Activated B cell treated with CpG ODN at 0.5 μM for 24 hours (primary cell): ENCODE measurements at regions of chr17 and their contacts with region 1.

Region 1: GRCh38 chr17:31008374-31009041 is 37.7 kb downstream of the RNF135 start:
- DNase-seq: peak; percentile 66
- ATAC-seq: peak; percentile 85
- H3K4me3 Mint-ChIP-seq: peak overlapping the region; percentile 91
- H3K27ac Mint-ChIP-seq: peak overlapping the region; percentile 85
- H3K4me1 Mint-ChIP-seq: peaks cover 24% of the 10 kb centered on the region
- H3K27me3 Mint-ChIP-seq: no peaks in the 10 kb centered on the region
- CTCF ChIP-seq: no peak

Region 2: GRCh38 chr17:30906101-30906911 is 102.2 kb before region 1 on chr17 and contains the start of gene TEFM:
- CTCF ChIA-PET with region 1: interaction called, 4 read pairs
- POLR2A ChIA-PET with region 1: interaction called, 6 read pairs
- intact Hi-C with region 1: loop called (anchors 2 kb)
- DNase-seq: peak; percentile 90
- ATAC-seq: peak; percentile 98
- H3K4me3 Mint-ChIP-seq: peak within 1 kb of the TSS; percentile 95
- H3K27ac Mint-ChIP-seq: peak within 1 kb of the TSS; percentile 93
- H3K4me1 Mint-ChIP-seq: peaks cover 42% of the 10 kb centered on the region
- H3K27me3 Mint-ChIP-seq: no peaks in the 10 kb centered on the region
- CTCF ChIP-seq: no peak
- total RNA-seq, gene TEFM: 23.0 and 25.2 TPM in 2 replicates

Region 3: GRCh38 chr17:30921544-30922196 is 86.8 kb before region 1 on chr17 and contains the start of gene ADAP2:
- CTCF ChIA-PET with region 1: interaction called, 3 read pairs
- POLR2A ChIA-PET with region 1: interaction called, 5 read pairs
- intact Hi-C with region 1: loop called (anchors 5 kb)
- DNase-seq: peak; percentile 53
- ATAC-seq: peak; percentile 73
- H3K4me3 Mint-ChIP-seq: peak within 1 kb of the TSS; percentile 93
- H3K27ac Mint-ChIP-seq: peak within 1 kb of the TSS; percentile 77
- H3K4me1 Mint-ChIP-seq: peaks cover 23% of the 10 kb centered on the region
- H3K27me3 Mint-ChIP-seq: peaks cover 1% of the 10 kb centered on the region
- CTCF ChIP-seq: no peak
- total RNA-seq, gene ADAP2: 16.0 and 16.9 TPM in 2 replicates

Region 4: GRCh38 chr17:30933966-30934365 is 74.5 kb before region 1 on chr17:
- CTCF ChIA-PET with region 1: no interaction called
- POLR2A ChIA-PET with region 1: interaction called, 10 read pairs
- intact Hi-C with region 1: no loop called
- DNase-seq: no peak
- ATAC-seq: no peak
- H3K4me3 Mint-ChIP-seq: no peak overlapping the region
- H3K27ac Mint-ChIP-seq: peak overlapping the region; percentile 42
- H3K4me1 Mint-ChIP-seq: peaks cover 8% of the 10 kb centered on the region
- H3K27me3 Mint-ChIP-seq: no peaks in the 10 kb centered on the region
- CTCF ChIP-seq: no peak

Region 5: GRCh38 chr17:30961209-30962188 is 47.0 kb before region 1 on chr17:
- CTCF ChIA-PET with region 1: no interaction called
- POLR2A ChIA-PET with region 1: interaction called, 11 read pairs
- intact Hi-C with region 1: loop called (anchors 2 kb)
- DNase-seq: peak; percentile 53
- ATAC-seq: peak; percentile 72
- H3K4me3 Mint-ChIP-seq: peak overlapping the region; percentile 78
- H3K27ac Mint-ChIP-seq: peak overlapping the region; percentile 88
- H3K4me1 Mint-ChIP-seq: peaks cover 72% of the 10 kb centered on the region
- H3K27me3 Mint-ChIP-seq: no peaks in the 10 kb centered on the region
- CTCF ChIP-seq: no peak

Region 6: DNA sequence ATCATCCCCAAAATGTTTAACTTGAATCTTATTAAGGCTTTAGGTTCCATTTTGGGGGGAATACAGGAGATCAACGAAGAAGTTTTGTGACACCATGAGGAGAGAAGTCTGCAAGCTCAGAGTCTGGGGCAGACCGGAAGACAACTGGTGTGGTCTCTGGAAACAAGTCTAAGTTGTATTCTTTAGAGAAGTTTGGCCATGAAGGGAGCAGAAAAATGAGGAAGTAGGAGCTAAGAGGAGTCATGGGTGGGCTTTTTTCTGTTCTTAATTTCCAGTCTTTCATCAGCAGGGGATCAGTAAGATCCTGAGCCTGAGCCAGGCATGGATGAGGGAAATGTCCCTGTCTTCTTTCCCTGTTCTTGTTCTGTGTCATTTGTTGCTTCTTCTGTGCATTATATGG is 50.5 kb after region 1 on chr17:
- CTCF ChIA-PET with region 1: no interaction called
- POLR2A ChIA-PET with region 1: no interaction called
- intact Hi-C with region 1: no loop called
- DNase-seq: no peak
- ATAC-seq: no peak
- H3K4me3 Mint-ChIP-seq: no peak overlapping the region
- H3K27ac Mint-ChIP-seq: no peak overlapping the region
- H3K4me1 Mint-ChIP-seq: peaks cover 5% of the 10 kb centered on the region
- H3K27me3 Mint-ChIP-seq: no peaks in the 10 kb centered on the region
- CTCF ChIP-seq: no peak

Region 7: DNA sequence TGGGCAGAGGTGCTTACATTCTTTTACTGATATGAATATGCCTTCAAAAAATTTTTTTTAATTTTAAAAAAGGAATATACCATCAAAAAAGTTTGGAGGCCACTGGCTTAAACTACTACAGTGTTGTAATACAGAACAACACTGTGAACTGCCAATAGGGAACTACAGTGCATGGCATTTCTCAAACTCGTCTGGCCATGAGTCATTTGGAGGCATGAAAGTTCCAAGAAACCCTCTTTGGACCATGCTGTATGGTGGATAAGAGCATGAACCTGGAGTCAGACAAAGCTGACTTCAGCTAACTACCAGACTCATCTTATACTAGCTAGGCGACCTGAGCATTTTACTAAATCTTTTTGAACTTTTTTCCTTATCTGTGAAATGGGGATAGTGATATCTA is 77.1 kb after region 1 on chr17:
- CTCF ChIA-PET with region 1: no interaction called
- POLR2A ChIA-PET with region 1: no interaction called
- intact Hi-C with region 1: no loop called
- DNase-seq: no peak
- ATAC-seq: no peak
- H3K4me3 Mint-ChIP-seq: no peak overlapping the region
- H3K27ac Mint-ChIP-seq: no peak overlapping the region
- H3K4me1 Mint-ChIP-seq: no peaks in the 10 kb centered on the region
- H3K27me3 Mint-ChIP-seq: no peaks in the 10 kb centered on the region
- CTCF ChIP-seq: no peak

Region 8: DNA sequence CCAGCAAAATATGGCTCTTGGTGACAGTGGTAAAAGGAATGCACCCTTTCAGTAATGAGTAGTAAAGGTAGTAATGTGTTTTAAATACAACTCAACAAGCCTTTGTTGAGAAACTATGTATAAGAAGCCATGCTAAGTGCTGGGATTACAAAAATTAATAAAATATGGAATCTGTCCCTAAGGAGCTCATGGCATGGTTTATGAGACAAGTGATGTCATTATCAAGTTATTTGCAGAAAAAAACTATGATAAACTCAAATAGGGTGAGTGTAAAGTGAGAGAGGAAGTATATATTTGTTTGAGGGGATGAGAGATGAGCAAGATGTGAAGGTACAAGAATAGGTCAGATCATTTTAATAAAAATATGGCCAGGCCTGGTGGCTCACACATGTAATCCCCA is 163.2 kb after region 1 on chr17:
- CTCF ChIA-PET with region 1: no interaction called
- POLR2A ChIA-PET with region 1: no interaction called
- intact Hi-C with region 1: no loop called
- DNase-seq: no peak
- ATAC-seq: no peak
- H3K4me3 Mint-ChIP-seq: no peak overlapping the region
- H3K27ac Mint-ChIP-seq: no peak overlapping the region
- H3K4me1 Mint-ChIP-seq: no peaks in the 10 kb centered on the region
- H3K27me3 Mint-ChIP-seq: no peaks in the 10 kb centered on the region
- CTCF ChIP-seq: no peak

Region 9: GRCh38 chr17:31216053-31216751 is 207.7 kb after region 1 on chr17:
- CTCF ChIA-PET with region 1: interaction called, 8 read pairs
- POLR2A ChIA-PET with region 1: no interaction called
- intact Hi-C with region 1: loop called (anchors 1 kb)
- DNase-seq: no peak
- ATAC-seq: no peak
- H3K4me3 Mint-ChIP-seq: no peak overlapping the region
- H3K27ac Mint-ChIP-seq: no peak overlapping the region
- H3K4me1 Mint-ChIP-seq: no peaks in the 10 kb centered on the region
- H3K27me3 Mint-ChIP-seq: no peaks in the 10 kb centered on the region
- CTCF ChIP-seq: peak; percentile 72

Region 10: GRCh38 chr17:31524926-31525800 is 516.7 kb after region 1 on chr17:
- CTCF ChIA-PET with region 1: no interaction called
- POLR2A ChIA-PET with region 1: no interaction called
- intact Hi-C with region 1: loop called (anchors 1 kb)
- DNase-seq: peak; percentile 89
- ATAC-seq: peak; percentile 78
- H3K4me3 Mint-ChIP-seq: no peak overlapping the region
- H3K27ac Mint-ChIP-seq: peak overlapping the region; percentile 24
- H3K4me1 Mint-ChIP-seq: peaks cover 9% of the 10 kb centered on the region
- H3K27me3 Mint-ChIP-seq: no peaks in the 10 kb centered on the region
- CTCF ChIP-seq: peak; percentile 88